ENCODE measurements at regions of chr12 and their contacts with region 1.

Region 1: DNA sequence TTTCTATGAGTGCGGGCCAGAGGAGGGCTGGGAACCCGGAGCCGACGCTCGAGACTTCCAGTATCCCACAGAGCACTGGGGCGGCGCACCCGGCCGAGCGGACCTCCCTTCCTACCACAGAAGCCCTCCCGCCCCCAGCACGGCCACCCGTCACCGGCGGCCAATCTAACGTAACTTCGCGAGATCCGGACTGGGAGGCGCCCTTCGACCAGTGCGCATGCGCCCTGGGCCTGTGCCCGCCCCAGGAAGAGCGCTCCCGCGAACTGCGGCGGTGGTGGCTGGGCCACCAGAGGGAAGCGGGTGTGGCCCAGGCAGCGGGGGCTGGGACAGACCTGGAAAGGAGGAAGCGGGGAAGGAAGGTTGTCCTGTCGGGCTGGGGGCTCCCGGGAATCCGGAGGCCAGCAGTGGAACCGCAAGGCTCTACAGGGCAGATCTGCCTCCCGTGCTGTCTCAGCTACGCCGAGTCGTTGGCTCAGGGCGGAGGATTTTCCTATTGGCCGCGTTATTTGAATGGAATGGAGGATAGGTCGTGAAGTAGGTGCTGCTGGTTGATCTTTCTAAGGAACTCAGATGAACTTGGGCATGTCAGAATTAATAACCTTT is at the start of gene PPP1R12A:
- DNase-seq: peak; percentile 91 to 98 (median 94)
- ATAC-seq: peak; percentile 89
- H3K4me3 ChIP-seq: peak within 1 kb of the TSS; percentile 91
- H3K27ac ChIP-seq: peak within 1 kb of the TSS; percentile 97
- H3K4me1 ChIP-seq: peaks cover 3 to 11% of the 10 kb centered on the region in 2 experiments; a peak in 3 of 5 replicates
- H3K27me3 ChIP-seq: no peaks in the 10 kb centered on the region
- CTCF ChIP-seq: peak in 1 of 3 experiments; percentile 11; a peak in 1 of 6 replicates
- EP300 ChIP-seq: no peak
- POLR2A ChIP-seq: peak; percentile 96
- RAD21 ChIP-seq: peak in 1 of 2 experiments; percentile 19; a peak in 1 of 4 replicates
- polyA plus RNA-seq, gene PPP1R12A: 26.4 to 42.3 TPM

Region 2: GRCh38 chr12:79782197-79782900 is 152.8 kb before region 1 on chr12:
- CTCF ChIA-PET with region 1: no interaction called
- POLR2A ChIA-PET with region 1: interaction called, 3 read pairs
- in situ Hi-C with region 1: no loop called
- intact Hi-C with region 1: loop called (anchors 10 kb)
- DNase-seq: no peak
- ATAC-seq: peak; percentile 36
- H3K4me3 ChIP-seq: no peak overlapping the region
- H3K27ac ChIP-seq: peak overlapping the region; percentile 44; the same call in 1 of the 3 replicates
- H3K4me1 ChIP-seq: peaks cover 0 to 8% of the 10 kb centered on the region in 2 experiments; a peak in 2 of 5 replicates
- H3K27me3 ChIP-seq: no peaks in the 10 kb centered on the region
- CTCF ChIP-seq: no peak
- EP300 ChIP-seq: no peak
- POLR2A ChIP-seq: no peak
- RAD21 ChIP-seq: no peak

Region 3: DNA sequence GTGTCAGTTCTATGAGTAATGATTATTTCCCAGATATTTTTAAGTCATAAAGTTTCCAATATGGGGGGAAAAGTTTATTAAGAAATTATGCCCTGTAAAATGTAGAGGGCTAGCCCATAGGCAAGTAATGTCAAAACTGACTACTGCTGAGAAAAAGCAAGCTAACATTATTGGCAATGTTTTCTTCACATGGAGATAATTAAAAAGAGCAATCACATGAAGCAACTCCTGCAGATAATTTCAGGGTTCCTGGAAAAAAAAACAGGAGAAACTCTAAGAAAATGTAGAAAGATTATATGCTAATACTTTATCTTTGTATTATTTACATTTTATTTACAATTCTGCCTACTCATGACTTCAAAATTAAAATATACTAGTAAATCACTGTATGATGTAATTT is 40.1 kb before region 1 on chr12:
- CTCF ChIA-PET with region 1: no interaction called
- POLR2A ChIA-PET with region 1: no interaction called
- in situ Hi-C with region 1: no loop called
- intact Hi-C with region 1: loop called (anchors 2 kb)
- DNase-seq: no peak
- ATAC-seq: no peak
- H3K4me3 ChIP-seq: no peak overlapping the region
- H3K27ac ChIP-seq: no peak overlapping the region
- H3K4me1 ChIP-seq: peaks cover 0 to 5% of the 10 kb centered on the region in 2 experiments; a peak in 3 of 5 replicates
- H3K27me3 ChIP-seq: no peaks in the 10 kb centered on the region
- CTCF ChIP-seq: no peak
- EP300 ChIP-seq: no peak
- POLR2A ChIP-seq: no peak
- RAD21 ChIP-seq: no peak

Region 4: DNA sequence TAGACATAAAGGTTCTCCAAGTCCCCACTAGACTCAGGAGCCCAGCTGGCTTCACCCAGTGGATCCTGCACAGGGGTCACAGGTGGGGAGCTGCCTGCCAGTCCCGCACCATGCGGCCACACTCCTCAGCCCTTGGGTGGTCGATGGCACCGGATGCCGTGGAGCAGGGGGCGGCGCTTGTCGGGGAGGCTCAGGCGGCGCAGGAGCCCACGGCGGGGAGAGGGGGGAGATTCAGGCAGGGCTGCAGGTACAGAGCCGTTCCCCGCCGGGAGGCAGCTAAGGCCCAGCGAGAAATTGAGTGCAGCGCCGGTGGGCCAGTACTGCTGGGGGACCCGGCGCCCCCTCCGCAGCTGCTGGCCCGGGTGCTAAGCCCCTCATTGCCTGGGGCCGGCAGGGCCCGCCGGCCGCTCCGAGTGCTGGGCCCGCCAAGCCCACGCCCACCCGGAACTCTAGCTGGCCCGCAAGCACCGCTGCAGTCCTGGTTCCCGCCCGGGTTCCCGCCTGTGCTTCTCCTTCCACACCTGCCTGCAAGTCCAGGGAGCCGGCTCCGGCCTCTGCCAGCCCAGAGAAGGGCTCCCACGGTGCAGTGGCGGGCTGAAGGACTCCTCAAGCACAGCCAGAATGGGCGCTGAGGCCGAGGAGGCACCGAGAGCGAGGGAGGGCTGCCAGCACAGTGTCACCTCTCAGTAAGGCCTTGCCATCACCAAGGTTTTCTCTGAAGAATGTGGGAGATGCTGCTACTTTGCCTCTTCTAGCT is 58.2 kb after region 1 on chr12:
- CTCF ChIA-PET with region 1: no interaction called
- POLR2A ChIA-PET with region 1: no interaction called
- in situ Hi-C with region 1: no loop called
- intact Hi-C with region 1: loop called (anchors 2 kb)
- DNase-seq: no peak
- ATAC-seq: peak; percentile 35
- H3K4me3 ChIP-seq: no peak overlapping the region
- H3K27ac ChIP-seq: no peak overlapping the region
- H3K4me1 ChIP-seq: peaks cover 3 to 7% of the 10 kb centered on the region in 2 experiments; a peak in 2 of 5 replicates
- H3K27me3 ChIP-seq: no peaks in the 10 kb centered on the region
- CTCF ChIP-seq: no peak
- EP300 ChIP-seq: no peak
- POLR2A ChIP-seq: no peak
- RAD21 ChIP-seq: no peak

Region 5: DNA sequence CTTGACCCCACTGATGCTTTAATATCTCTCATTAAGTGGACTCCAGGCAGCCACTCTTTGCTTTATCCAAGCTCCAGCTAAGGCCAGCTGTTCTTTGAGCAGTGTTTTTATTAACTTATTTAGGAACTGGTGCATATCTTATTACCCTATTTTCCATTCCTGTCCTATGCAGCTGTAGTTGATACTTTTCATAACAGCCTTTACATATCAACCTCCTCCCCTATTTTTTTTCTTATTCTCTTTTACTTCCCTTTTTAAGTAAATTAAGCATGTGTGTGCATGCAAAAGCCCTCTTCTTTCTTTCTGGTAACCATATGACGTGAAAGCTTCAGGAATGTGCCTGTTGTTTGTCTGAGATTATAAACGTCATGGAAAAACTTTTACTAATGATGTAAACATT is 630.1 kb after region 1 on chr12:
- CTCF ChIA-PET with region 1: no interaction called
- POLR2A ChIA-PET with region 1: no interaction called
- in situ Hi-C with region 1: no loop called
- intact Hi-C with region 1: no loop called
- DNase-seq: no peak
- ATAC-seq: no peak
- H3K4me3 ChIP-seq: no peak overlapping the region
- H3K27ac ChIP-seq: no peak overlapping the region
- H3K4me1 ChIP-seq: no peaks in the 10 kb centered on the region
- H3K27me3 ChIP-seq: no peaks in the 10 kb centered on the region
- CTCF ChIP-seq: no peak
- EP300 ChIP-seq: no peak
- POLR2A ChIP-seq: no peak
- RAD21 ChIP-seq: no peak